CD4-positive, alpha-beta memory T cell (primary cell): ENCODE measurements at regions of chr1 and their contacts with region 1.

Region 1: GRCh38 chr1:32650752-32651460 is at the start of gene RBBP4:
- DNase-seq: peak; percentile 96 to 99 (median 98)
- H3K4me3 ChIP-seq: peak within 1 kb of the TSS; percentile 91 to 93
- H3K4me3 Mint-ChIP-seq: peak within 1 kb of the TSS; percentile 91 to 98 (median 94)
- H3K27ac ChIP-seq: peak within 1 kb of the TSS; percentile 95
- H3K27ac Mint-ChIP-seq: peak within 1 kb of the TSS; percentile 97 to 100 (median 99)
- H3K4me1 ChIP-seq: peaks cover 63% of the 10 kb centered on the region
- H3K4me1 Mint-ChIP-seq: peaks cover 41 to 80% (median 58%) of the 10 kb centered on the region in 4 donors
- H3K27me3 ChIP-seq: no peaks in the 10 kb centered on the region
- H3K27me3 Mint-ChIP-seq: no peaks in the 10 kb centered on the region
- total RNA-seq, gene RBBP4: 185 to 186 TPM

Region 2: DNA sequence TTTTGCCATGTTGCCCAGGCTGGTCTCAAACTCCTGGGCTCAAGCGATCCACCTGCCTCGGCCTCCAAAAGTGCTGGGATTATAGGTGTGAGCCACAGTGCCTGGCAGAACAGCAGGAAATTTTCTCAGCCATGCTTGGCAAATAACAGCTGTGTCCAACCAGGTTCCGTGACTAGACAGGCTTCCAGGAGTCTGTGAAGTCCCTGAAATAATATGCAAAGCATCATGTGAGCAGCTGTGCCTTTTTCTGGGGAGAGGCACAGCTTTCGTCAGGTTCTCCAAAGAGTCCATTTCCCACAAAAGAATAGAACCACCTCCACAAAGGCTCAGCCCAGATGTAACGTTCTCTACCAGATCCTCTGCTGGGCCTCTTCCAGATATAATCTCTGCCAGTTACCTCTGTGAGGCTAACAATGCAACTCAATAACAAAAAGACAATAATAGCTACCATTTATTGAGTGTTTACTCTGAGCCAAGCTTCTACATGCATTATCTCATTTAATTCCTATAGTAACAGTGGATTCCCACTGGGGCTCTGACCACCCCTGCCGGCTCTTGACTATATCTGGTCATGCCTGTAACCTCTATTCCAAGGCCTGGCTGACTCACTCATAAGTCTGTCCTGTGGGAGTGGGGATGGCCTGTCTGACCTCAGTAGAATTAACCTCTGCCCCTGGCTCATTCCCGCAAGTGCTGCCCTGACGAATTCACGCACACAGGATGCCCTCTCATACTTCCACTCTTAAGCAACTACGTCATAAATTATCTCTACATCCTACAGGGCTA is 1407.2 kb before region 1 on chr1:
- CTCF ChIA-PET with region 1: no interaction called
- POLR2A ChIA-PET with region 1: no interaction called
- intact Hi-C with region 1: no loop called
- DNase-seq: no peak
- H3K4me3 ChIP-seq: no peak overlapping the region
- H3K4me3 Mint-ChIP-seq: no peak overlapping the region
- H3K27ac ChIP-seq: no peak overlapping the region
- H3K27ac Mint-ChIP-seq: no peak overlapping the region
- H3K4me1 ChIP-seq: no peaks in the 10 kb centered on the region
- H3K4me1 Mint-ChIP-seq: peaks cover 3 to 15% (median 9%) of the 10 kb centered on the region in 4 donors
- H3K27me3 ChIP-seq: peaks cover 15% of the 10 kb centered on the region
- H3K27me3 Mint-ChIP-seq: peaks cover 14% of the 10 kb centered on the region in 2 donors

Region 3: GRCh38 chr1:31644560-31645273 is 1006.2 kb before region 1 on chr1 and contains the start of gene PEF1:
- CTCF ChIA-PET with region 1: no interaction called
- POLR2A ChIA-PET with region 1: interaction called, 3 read pairs
- intact Hi-C with region 1: loop called (anchors 10 kb)
- DNase-seq: peak; percentile 99 to 100 (median 99)
- H3K4me3 ChIP-seq: peak within 1 kb of the TSS; percentile 72 to 74
- H3K4me3 Mint-ChIP-seq: peak within 1 kb of the TSS; percentile 97 to 100 (median 100)
- H3K27ac ChIP-seq: peak within 1 kb of the TSS; percentile 99
- H3K27ac Mint-ChIP-seq: peak within 1 kb of the TSS; percentile 98 to 100 (median 100)
- H3K4me1 ChIP-seq: peaks cover 41% of the 10 kb centered on the region
- H3K4me1 Mint-ChIP-seq: peaks cover 23 to 43% (median 32%) of the 10 kb centered on the region in 4 donors
- H3K27me3 ChIP-seq: no peaks in the 10 kb centered on the region
- H3K27me3 Mint-ChIP-seq: no peaks in the 10 kb centered on the region
- total RNA-seq, gene PEF1: 39.1 to 41.7 TPM

Region 4: DNA sequence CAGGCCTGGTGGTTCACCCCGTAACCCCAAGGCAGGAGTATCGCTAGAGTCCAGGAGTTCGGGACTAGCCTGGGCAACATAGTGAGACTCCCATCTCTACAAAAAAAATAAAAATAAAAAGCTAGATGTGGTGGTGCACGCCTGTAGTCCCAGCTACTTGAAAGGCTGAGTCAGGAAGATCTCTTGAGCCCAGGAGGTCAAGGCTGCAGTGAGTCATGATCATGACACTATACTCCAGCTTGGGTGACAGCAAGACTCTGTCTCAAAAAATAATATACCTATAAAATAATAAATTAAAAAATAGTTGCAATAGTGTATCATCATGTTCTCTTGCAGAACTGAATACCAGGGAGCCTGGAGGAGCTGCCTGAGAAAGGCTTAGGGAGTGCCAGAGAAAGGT is 598.0 kb before region 1 on chr1:
- CTCF ChIA-PET with region 1: no interaction called
- POLR2A ChIA-PET with region 1: no interaction called
- intact Hi-C with region 1: no loop called
- DNase-seq: no peak
- H3K4me3 ChIP-seq: no peak overlapping the region
- H3K4me3 Mint-ChIP-seq: no peak overlapping the region
- H3K27ac ChIP-seq: no peak overlapping the region
- H3K27ac Mint-ChIP-seq: peak overlapping the region in 1 of 7 donors; percentile 56
- H3K4me1 ChIP-seq: no peaks in the 10 kb centered on the region
- H3K4me1 Mint-ChIP-seq: no peaks in the 10 kb centered on the region
- H3K27me3 ChIP-seq: no peaks in the 10 kb centered on the region
- H3K27me3 Mint-ChIP-seq: no peaks in the 10 kb centered on the region

Region 5: DNA sequence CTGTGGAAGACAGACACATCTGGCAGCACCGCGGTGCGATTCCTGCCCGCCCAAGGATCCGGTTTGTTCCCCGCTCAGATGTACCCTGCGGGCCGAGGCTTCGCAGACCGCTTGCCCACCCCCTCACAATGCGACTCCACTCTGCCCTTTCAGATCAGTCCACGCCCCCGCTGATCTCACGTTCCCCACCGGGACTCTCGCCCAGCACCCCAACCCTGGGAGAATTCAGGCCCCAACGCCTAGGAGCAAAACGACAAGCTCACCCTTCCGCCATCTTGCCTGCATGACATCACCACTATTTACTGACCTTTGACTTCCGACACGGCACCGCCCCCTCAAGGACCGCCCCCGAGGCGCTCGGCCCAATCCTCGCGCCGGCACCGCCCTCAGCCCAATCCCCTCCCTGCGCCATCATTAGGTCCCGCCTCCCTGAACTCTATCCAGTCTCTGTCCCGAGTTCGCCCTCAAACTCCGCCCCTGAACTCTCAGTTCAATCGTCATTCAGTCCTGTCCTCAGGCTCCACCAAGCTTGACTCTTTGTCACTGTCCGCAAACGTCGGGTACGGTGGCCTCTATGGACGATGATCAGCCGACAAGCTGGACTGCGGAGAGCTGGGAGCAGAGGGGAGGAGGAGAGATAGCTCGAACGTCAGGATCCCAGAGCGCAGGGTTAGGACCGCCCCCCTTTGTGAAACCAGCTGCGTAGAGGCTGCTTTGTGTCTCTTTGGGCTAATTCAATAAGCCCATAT is 256.6 kb before region 1 on chr1 and contains the start of gene BSDC1:
- CTCF ChIA-PET with region 1: no interaction called
- POLR2A ChIA-PET with region 1: interaction called, 11 read pairs
- intact Hi-C with region 1: no loop called
- DNase-seq: peak; percentile 98 to 99 (median 99)
- H3K4me3 ChIP-seq: peak within 1 kb of the TSS; percentile 87
- H3K4me3 Mint-ChIP-seq: peak within 1 kb of the TSS; percentile 99 to 100 (median 100)
- H3K27ac ChIP-seq: peak within 1 kb of the TSS; percentile 95
- H3K27ac Mint-ChIP-seq: peak within 1 kb of the TSS; percentile 92 to 100 (median 100)
- H3K4me1 ChIP-seq: peaks cover 43% of the 10 kb centered on the region
- H3K4me1 Mint-ChIP-seq: peaks cover 5 to 25% (median 19%) of the 10 kb centered on the region in 4 donors
- H3K27me3 ChIP-seq: no peaks in the 10 kb centered on the region
- H3K27me3 Mint-ChIP-seq: peaks cover 0 to 1% of the 10 kb centered on the region in 2 donors
- total RNA-seq, gene BSDC1: 106 to 112 TPM

Region 6: GRCh38 chr1:32681999-32682398 is 31.1 kb after region 1 on chr1:
- CTCF ChIA-PET with region 1: no interaction called
- POLR2A ChIA-PET with region 1: no interaction called
- intact Hi-C with region 1: no loop called
- DNase-seq: no peak
- H3K4me3 ChIP-seq: no peak overlapping the region
- H3K4me3 Mint-ChIP-seq: no peak overlapping the region
- H3K27ac ChIP-seq: no peak overlapping the region
- H3K27ac Mint-ChIP-seq: peak overlapping the region in 1 of 7 donors; percentile 51
- H3K4me1 ChIP-seq: no peaks in the 10 kb centered on the region
- H3K4me1 Mint-ChIP-seq: peaks cover 0 to 2% (median 0%) of the 10 kb centered on the region in 4 donors
- H3K27me3 ChIP-seq: no peaks in the 10 kb centered on the region
- H3K27me3 Mint-ChIP-seq: no peaks in the 10 kb centered on the region

Region 7: DNA sequence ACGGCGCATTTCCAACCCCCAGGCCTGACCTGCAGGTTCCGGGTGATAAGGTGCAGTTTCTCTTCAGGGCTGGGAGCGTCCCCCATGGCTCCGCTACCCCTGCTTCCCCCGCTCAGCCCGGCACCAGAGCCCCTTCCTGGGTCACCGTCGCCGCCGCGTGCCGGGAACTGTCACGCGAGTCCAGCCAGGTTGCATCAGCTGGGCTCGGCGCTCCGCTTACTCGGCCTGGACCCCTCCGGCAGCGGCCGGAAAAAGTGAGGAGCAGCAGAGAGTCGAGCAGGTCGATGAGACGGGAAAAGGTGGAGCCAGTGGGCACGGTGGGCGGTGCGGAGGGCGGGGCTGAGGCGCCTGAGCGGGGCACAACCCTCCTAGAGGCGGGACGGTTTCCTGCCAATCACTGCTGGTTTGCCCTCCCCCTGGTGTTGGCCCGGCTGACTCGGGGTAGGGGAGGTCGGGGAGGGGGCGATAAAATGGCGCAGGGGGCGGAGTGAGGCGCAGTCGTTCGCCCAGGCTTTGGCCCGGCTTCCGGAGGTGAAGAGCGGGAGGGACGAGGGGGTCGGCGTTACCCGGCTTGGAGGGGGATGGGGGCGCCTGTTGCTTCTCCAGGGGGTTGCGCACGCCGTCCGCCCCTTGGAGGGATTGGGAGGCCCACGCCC is 166.4 kb after region 1 on chr1 and contains the starts of genes S100PBP and YARS1:
- CTCF ChIA-PET with region 1: no interaction called
- POLR2A ChIA-PET with region 1: interaction called, 22 read pairs
- intact Hi-C with region 1: loop called (anchors 1 kb)
- DNase-seq: peak; percentile 99 to 100 (median 99)
- H3K4me3 ChIP-seq: peak within 1 kb of the TSS; percentile 67 to 70
- H3K4me3 Mint-ChIP-seq: peak within 1 kb of the TSS; percentile 94 to 100 (median 96)
- H3K27ac ChIP-seq: peak within 1 kb of the TSS; percentile 89
- H3K27ac Mint-ChIP-seq: peak within 1 kb of the TSS; percentile 82 to 97 (median 95)
- H3K4me1 ChIP-seq: peaks cover 60% of the 10 kb centered on the region
- H3K4me1 Mint-ChIP-seq: peaks cover 36 to 71% (median 51%) of the 10 kb centered on the region in 4 donors
- H3K27me3 ChIP-seq: no peaks in the 10 kb centered on the region
- H3K27me3 Mint-ChIP-seq: no peaks in the 10 kb centered on the region
- total RNA-seq, gene S100PBP: 63.2 to 65.5 TPM
- total RNA-seq, gene YARS1: 110 to 114 TPM

Region 8: DNA sequence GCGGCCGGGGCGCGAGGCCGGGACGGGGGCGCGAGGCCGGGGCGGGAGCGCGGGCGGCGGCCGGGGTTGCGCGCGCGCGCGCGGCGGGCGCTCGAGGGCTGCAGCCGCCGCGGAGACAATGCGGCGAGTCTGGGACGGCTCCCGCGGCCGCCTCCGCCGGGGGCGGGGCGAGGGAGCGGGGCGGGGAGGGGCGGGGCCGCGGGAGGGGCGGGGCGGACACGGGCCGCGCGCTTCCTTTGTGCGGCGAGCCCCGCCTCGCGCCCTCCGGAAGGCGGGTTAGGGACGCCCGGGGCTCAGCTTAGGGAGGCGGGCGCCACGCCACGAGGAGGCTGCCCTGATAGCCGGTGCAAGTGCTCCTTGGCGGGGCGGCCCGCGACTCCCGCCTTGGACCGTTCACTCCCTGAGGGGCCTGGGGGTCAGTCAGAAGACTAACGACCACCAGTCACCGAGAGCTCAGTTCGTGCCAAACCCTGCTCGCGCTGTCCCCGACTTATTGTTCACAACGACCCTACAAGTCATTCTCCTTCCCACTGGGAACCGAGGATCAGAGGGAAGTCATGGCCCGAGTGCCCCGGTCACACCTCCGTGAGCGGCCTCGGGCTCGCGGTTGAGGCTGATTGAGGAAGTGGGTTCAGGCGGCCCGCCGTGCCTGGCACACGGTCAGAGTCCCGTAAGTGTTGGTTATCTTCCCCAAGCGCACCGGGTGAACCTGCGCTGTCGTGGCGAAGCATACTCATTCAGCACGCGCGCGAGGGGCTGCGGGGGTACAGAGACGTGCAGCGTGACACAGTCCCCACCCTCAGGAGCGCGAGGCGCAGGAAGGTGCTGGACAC is 699.1 kb after region 1 on chr1:
- CTCF ChIA-PET with region 1: no interaction called
- POLR2A ChIA-PET with region 1: interaction called, 4 read pairs
- intact Hi-C with region 1: loop called (anchors 2 kb)
- DNase-seq: peak; percentile 73 to 82 (median 78)
- H3K4me3 ChIP-seq: peak overlapping the region; percentile 82 to 84
- H3K4me3 Mint-ChIP-seq: peak overlapping the region; percentile 87 to 93 (median 91)
- H3K27ac ChIP-seq: peak overlapping the region; percentile 65
- H3K27ac Mint-ChIP-seq: peak overlapping the region; percentile 79 to 95 (median 91)
- H3K4me1 ChIP-seq: peaks cover 47% of the 10 kb centered on the region
- H3K4me1 Mint-ChIP-seq: peaks cover 25 to 54% (median 42%) of the 10 kb centered on the region in 4 donors
- H3K27me3 ChIP-seq: no peaks in the 10 kb centered on the region
- H3K27me3 Mint-ChIP-seq: no peaks in the 10 kb centered on the region